Heart right ventricle (tissue), 16 donors: ENCODE measurements at regions of chr12 and their contacts with region 1.

Region 1: DNA sequence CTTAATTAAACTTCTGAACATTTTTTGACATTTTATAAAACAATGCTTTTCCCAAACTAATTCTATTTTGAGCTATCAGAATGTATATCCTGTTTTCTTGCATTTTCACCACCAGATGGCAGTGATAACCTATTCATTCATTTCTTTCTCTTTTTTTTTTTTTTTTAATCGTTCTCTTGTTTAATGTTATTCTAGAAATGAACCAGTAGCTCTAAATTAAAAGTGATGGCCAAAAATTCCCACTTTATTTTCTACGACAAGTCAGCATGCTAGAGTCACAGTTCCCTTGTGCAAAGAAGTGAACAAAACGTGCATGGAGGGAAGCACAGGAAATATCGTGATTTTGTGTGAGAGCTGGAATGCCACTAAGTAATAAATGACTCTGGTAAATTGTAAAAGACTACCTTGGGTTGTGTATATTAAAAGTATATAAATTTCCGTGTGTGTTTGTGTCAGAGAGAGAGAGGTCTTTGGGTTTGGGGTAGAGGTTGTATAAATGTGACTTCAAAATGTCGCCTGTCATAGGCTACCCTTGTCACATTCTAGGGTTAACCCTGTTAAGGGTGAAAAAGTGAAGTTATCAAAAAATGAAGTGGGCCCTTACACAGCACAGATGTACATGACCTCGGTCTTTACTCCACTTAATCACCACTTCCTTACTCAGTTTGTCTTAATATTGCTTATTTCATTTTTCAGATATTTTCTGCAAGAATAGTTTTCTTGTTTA is 40.4 kb upstream of the LDHB start:
- DNase-seq: no peak
- ATAC-seq: peak in 3 of 8 donors; percentile 25 to 62 (median 28)
- H3K4me3 ChIP-seq: peak overlapping the region in 5 of 10 donors; percentile 21 to 40 (median 29)
- H3K27ac ChIP-seq: peak overlapping the region in 2 of 10 donors; percentile 17 to 50
- H3K4me1 ChIP-seq: peaks cover 0 to 9% (median 4%) of the 10 kb centered on the region in 9 donors
- H3K27me3 ChIP-seq: no peaks in the 10 kb centered on the region
- CTCF ChIP-seq: peak; percentile 40 to 88 (median 73)

Region 2: GRCh38 chr12:21677622-21678277 is 20.3 kb before region 1 on chr12:
- intact Hi-C with region 1: no loop called
- DNase-seq: no peak
- ATAC-seq: no peak
- H3K4me3 ChIP-seq: no peak overlapping the region
- H3K27ac ChIP-seq: no peak overlapping the region
- H3K4me1 ChIP-seq: peaks cover 0 to 17% (median under 1%) of the 10 kb centered on the region in 9 donors
- H3K27me3 ChIP-seq: no peaks in the 10 kb centered on the region
- CTCF ChIP-seq: no peak

Region 3: DNA sequence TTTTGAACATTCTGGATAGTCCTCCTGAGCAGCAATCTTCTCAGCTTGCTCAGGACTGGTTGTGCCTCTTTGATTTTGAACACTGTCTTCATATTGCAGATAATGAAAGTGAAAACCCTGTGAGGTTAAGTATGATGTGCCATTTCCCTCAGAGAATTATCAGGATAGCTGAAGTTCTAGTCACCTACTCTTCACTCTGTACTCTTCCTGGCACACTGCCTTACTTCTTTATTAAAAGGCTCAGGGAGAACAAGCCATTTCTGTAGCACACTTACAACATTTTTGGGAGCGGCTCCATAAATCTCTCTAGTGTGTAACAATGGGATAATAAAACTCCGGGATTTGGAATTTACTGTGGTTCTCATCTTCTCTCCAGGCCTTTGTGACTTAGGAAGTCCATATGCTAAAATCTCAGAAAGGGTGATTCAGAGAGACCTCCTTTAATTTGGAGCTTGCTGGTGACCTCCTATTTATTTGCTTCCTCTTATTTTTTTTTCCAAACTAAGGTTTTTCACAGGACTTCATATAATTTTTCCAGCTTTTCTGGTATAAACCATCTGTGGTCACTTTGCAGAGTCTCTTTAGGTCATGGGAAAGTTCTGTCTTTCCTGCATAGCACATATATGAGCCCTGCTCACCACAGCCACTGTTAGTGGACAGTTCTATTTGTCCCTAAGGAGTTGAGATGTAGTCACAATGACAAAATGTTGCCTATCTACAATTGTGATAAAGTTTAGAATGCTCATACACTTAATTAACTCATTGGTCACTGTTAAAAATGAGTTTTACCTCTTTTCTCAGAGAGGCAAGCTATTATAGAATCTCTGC is 13.1 kb after region 1 on chr12:
- intact Hi-C with region 1: loop called in 1 of 10 experiments (anchors 2 kb)
- DNase-seq: no peak
- ATAC-seq: peak in 7 of 8 donors; percentile 46 to 92 (median 59)
- H3K4me3 ChIP-seq: no peak overlapping the region
- H3K27ac ChIP-seq: peak overlapping the region in 9 of 10 donors; percentile 8 to 73 (median 52)
- H3K4me1 ChIP-seq: peaks cover 0 to 19% (median 15%) of the 10 kb centered on the region in 9 donors
- H3K27me3 ChIP-seq: no peaks in the 10 kb centered on the region
- CTCF ChIP-seq: no peak

Region 4: DNA sequence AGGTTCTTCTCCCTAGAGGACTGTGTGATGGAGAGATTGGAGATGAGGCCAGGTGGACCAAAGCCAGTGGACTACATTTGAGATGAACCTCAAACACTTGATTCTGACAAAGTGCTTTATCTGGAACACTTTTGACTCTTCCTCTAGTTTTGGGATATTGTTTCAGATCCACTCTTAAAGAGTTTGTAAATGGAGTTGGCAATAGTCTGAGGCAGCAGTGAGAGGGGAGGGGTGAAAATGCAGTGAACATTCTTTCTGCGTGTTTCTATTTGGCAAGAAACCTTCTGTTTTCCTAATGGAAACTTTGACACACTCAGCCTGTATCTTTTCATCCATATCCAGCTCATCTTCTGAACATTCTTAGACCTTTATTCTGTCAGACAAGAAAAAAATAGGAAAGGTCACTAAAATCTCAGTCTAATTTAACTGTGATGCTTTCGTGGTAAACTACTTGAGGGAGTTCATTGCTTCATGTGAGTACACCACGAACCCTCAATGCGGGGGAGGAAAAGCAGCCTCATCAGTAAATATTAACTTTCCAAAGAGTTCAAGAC is 133.8 kb after region 1 on chr12:
- intact Hi-C with region 1: loop called in 1 of 10 experiments (anchors 10 kb)
- DNase-seq: peak in 1 of 2 donors; percentile 36
- ATAC-seq: peak; percentile 60 to 87 (median 74)
- H3K4me3 ChIP-seq: no peak overlapping the region
- H3K27ac ChIP-seq: peak overlapping the region in 9 of 10 donors; percentile 23 to 77 (median 59)
- H3K4me1 ChIP-seq: peaks cover 0 to 30% (median 7%) of the 10 kb centered on the region in 9 donors
- H3K27me3 ChIP-seq: no peaks in the 10 kb centered on the region
- CTCF ChIP-seq: no peak

Region 5: DNA sequence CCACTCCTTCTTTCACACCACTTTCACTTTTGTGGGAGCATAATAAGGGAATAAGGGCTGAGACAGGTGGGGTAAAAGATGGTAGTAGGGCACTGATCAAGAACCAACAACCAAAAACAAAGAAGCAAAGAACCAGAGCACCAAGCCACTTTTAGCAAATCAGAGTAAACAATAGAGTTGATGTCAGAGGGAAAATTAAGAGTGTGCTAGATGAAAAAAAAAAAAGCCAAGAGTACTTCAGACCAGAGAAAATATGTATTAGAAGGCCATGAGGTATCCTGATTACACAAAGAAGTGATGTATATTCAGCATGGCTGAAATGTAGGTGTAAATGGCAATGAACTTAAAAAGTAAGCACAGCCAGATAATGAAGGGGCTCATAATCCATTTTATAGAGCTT is 167.8 kb after region 1 on chr12:
- intact Hi-C with region 1: no loop called
- DNase-seq: no peak
- ATAC-seq: no peak
- H3K4me3 ChIP-seq: no peak overlapping the region
- H3K27ac ChIP-seq: no peak overlapping the region
- H3K4me1 ChIP-seq: peaks cover 0 to 7% (median 0%) of the 10 kb centered on the region in 9 donors
- H3K27me3 ChIP-seq: no peaks in the 10 kb centered on the region
- CTCF ChIP-seq: no peak

Region 6: GRCh38 chr12:21989819-21990412 is 291.8 kb after region 1 on chr12:
- intact Hi-C with region 1: loop called in 5 of 10 experiments (anchors 2 kb)
- DNase-seq: no peak
- ATAC-seq: no peak
- H3K4me3 ChIP-seq: no peak overlapping the region
- H3K27ac ChIP-seq: peak overlapping the region in 1 of 10 donors; percentile 13
- H3K4me1 ChIP-seq: peaks cover 0 to 6% (median 0%) of the 10 kb centered on the region in 9 donors
- H3K27me3 ChIP-seq: no peaks in the 10 kb centered on the region
- CTCF ChIP-seq: peak; percentile 46 to 72 (median 56)

Region 7: GRCh38 chr12:22018860-22019259 is 320.8 kb after region 1 on chr12:
- intact Hi-C with region 1: loop called (anchors 1 to 10 kb)
- DNase-seq: no peak
- ATAC-seq: no peak
- H3K4me3 ChIP-seq: no peak overlapping the region
- H3K27ac ChIP-seq: no peak overlapping the region
- H3K4me1 ChIP-seq: peaks cover 0 to 12% (median 0%) of the 10 kb centered on the region in 9 donors
- H3K27me3 ChIP-seq: no peaks in the 10 kb centered on the region
- CTCF ChIP-seq: peak; percentile 23 to 74 (median 63)

Region 8: DNA sequence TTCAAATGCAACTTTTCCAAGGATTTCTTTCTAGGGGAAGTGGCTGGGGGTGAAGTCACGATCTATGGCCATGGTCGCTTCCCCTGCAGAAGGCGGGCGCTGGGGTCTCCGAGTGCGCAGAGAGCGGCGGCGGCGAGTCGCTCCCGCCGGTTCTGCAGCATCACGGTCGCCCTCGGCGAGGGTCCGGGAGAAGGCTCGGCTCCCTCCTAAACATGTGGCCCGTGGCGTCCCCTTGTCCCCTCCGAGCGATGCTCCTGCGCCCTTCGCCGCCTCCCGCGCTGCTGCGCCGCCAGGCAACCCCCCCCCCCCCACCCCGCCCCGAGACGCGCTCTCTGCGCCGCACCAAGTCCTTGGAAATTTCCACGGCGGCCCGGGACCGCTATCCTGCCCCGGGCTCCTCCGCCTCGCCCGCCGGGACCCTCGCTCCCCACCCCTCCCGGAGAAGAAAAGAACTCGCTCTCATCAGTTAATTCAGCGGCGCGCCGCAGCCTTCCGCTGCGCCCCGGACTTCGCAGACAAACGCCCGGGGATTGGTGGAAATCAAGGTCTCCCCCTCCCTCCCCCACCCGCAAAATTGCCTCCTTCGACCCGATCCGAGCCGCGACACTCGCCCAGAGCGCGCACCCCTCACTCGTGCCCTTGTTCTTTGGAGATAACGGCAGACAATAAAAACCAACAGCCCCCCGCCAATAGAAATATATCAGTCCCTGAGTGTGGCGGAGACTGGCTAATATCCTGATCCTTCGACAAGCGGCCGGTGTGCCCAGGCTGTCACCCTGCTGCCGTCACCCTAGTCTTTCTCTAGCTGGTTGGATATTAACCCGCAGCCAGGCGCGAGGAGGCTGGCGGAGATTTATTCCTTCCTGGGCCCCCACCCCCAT is 636.6 kb after region 1 on chr12 and contains the start of gene ST8SIA1:
- intact Hi-C with region 1: loop called in 1 of 10 experiments (anchors 5 kb)
- DNase-seq: peak; percentile 29 to 50
- ATAC-seq: peak; percentile 55 to 66 (median 60)
- H3K4me3 ChIP-seq: peak within 1 kb of the TSS; percentile 52 to 72 (median 62)
- H3K27ac ChIP-seq: peak within 1 kb of the TSS in 9 of 10 donors; percentile 7 to 75 (median 54)
- H3K4me1 ChIP-seq: peaks cover 0 to 16% (median 6%) of the 10 kb centered on the region in 9 donors
- H3K27me3 ChIP-seq: peaks cover 0 to 46% (median 16%) of the 10 kb centered on the region in 7 donors
- CTCF ChIP-seq: no peak
- total RNA-seq, gene ST8SIA1: 1.0 to 4.9 (median 2.0) TPM